ENCODE measurements at regions of chr4 and their contacts with region 1.

Region 1: DNA sequence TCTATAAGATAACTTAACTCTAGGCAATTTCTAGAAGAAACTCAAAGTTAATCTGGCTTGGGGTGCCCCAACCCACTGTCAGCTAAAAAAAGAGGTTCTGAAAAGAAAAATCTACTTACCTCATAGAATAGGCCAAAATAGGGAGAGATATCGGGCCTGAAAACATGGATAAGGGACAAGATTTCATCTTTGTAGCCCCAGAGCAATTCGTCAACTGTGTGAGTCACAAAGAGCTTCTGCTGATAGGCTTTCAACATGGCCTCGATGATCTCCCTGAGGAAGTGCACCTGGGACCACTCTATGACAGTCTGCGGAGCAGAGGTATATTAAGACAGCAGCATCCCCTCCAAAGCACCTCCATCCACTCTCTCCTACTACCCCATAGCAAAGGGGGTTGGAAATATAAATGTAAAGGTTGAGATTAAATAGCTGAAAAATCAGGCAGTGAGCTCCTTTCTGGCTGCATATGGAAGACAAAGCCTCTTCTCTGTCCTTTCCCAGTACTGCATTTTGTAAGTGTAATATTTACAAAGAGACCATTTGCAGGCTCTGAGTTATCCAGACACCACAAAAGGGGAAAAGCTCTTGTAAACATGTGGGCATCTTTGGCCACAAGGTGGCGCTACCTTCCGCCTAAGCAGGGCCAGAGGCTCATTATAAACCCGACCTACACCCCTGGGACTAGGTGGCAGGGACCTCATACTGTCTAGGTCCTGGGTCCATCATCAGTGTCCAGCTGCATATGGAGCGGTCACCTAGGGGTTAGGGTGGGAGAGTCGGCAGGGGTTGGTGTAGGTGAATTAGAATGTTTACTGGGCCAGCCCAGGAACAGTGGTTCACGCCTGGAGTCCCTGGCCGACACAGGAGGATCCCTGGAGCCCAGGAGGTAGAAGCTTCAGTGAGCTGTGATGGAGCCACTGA is 31.5 kb upstream of the NUP54 start:
- DNase-seq: peak; percentile 68 to 84
- ATAC-seq: peak; percentile 86 to 92
- H3K4me3 ChIP-seq: no peak overlapping the region
- H3K27ac ChIP-seq: peak overlapping the region; percentile 34 to 70 (median 56)
- H3K4me1 ChIP-seq: peaks cover 15 to 30% of the 10 kb centered on the region in 2 donors
- H3K27me3 ChIP-seq: no peaks in the 10 kb centered on the region
- CTCF ChIP-seq: peak; percentile 89 to 96 (median 93)
- POLR2A ChIP-seq: no peak

Region 2: DNA sequence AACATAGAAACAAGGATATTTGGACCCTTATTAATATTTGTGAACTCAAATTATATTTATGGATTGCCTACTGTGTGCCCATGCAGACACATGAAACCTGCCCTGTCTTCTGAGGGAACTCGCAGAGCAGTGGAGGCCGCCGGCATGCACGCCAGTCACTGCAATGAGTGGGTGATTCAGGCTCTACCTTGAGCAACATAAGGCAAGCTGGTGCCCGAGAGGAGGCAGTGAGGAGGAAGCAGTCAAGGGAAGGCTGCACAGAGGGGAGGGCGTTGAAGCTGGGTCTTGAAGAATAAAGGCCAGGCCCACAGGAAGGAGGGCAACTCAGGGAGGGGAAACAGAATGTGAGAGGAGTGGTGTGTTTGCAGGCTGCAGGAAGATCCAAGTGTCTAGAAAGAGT is 330.2 kb before region 1 on chr4:
- in situ Hi-C with region 1: no loop called
- intact Hi-C with region 1: no loop called
- DNase-seq: no peak
- ATAC-seq: no peak
- H3K4me3 ChIP-seq: no peak overlapping the region
- H3K27ac ChIP-seq: no peak overlapping the region
- H3K4me1 ChIP-seq: peaks cover 4 to 5% of the 10 kb centered on the region in 2 donors
- H3K27me3 ChIP-seq: no peaks in the 10 kb centered on the region
- CTCF ChIP-seq: no peak
- POLR2A ChIP-seq: no peak

Region 3: DNA sequence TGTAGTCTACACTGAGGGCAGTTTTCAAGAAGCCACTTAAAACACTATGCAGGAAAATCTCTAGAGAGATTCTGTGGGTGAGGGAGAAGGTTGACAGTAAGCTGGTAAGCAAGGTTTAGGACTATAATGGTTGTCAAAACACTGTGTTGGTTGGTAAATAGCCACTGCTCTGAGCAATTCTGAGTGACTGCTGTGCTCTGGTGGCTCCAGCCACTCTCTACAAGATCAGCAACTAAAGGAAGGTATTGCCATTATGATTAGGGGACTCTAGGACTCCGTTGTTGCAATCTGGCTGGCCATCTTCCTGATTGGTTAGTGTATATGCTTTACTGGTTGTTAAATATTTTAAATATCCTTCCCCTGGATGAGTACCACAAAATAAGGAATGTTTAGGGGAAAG is 66.4 kb after region 1 on chr4:
- in situ Hi-C with region 1: loop called in 2 of 4 experiments (anchors 10 kb)
- intact Hi-C with region 1: loop called (anchors 2 kb)
- DNase-seq: no peak
- ATAC-seq: peak; percentile 75 to 79
- H3K4me3 ChIP-seq: no peak overlapping the region
- H3K27ac ChIP-seq: no peak overlapping the region
- H3K4me1 ChIP-seq: peaks cover 8 to 15% of the 10 kb centered on the region in 2 donors
- H3K27me3 ChIP-seq: no peaks in the 10 kb centered on the region
- CTCF ChIP-seq: peak in 3 of 5 experiments; percentile 19 to 32 (median 27)
- POLR2A ChIP-seq: no peak

Region 4: DNA sequence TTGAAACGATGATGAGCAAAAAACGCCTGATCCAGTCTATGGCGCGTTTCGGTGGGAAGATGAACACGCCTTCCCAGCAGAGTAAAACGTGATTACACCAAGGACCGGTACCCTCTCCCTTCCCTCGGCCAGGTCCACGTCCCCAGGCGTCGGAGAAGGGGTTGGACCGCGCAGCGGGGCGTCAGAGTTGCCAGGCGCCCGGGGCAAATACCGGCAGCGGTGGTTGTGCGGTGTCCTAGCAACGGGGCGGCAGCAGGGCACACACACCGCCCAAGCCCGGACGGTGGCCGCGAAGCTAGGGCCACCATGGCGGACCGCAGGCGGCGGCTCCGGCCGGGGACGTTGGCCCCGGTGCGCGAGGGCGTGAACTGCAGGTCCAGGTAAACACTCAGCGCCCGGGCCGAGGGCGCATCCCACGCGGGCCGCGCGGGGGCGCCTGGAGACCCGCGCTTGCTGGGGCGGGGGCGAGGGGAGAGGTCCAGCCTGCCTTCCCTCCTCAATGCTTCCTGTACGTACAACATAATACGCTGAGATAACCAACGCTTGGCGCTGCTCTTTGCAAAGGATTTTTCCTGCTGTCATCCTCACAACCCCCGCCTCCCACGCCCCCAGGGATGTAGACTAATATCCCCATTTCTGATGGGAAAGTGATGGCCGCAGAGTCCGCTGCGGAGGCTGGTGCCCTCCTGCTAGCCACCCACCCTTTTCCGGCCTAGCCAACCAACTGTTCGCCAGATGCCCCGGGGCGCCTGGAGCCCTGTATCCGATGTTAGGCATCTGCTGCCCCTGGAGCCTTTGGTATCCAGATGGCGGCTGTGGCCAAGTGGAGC is 72.0 kb after region 1 on chr4 and contains the start of gene FAM47E:
- in situ Hi-C with region 1: loop called in 2 of 4 experiments (anchors 10 kb)
- intact Hi-C with region 1: loop called (anchors 2 kb)
- DNase-seq: peak; percentile 73 to 85
- ATAC-seq: peak; percentile 89 to 92
- H3K4me3 ChIP-seq: peak within 1 kb of the TSS; percentile 63 to 84 (median 65)
- H3K27ac ChIP-seq: peak within 1 kb of the TSS; percentile 73 to 90 (median 78)
- H3K4me1 ChIP-seq: peaks cover 3 to 8% of the 10 kb centered on the region in 2 donors
- H3K27me3 ChIP-seq: no peaks in the 10 kb centered on the region
- CTCF ChIP-seq: peak; percentile 38 to 63 (median 53)
- POLR2A ChIP-seq: peak; percentile 14 to 52
- total RNA-seq, gene FAM47E: 0.56 to 6.8 (median 3.8) TPM

Region 5: DNA sequence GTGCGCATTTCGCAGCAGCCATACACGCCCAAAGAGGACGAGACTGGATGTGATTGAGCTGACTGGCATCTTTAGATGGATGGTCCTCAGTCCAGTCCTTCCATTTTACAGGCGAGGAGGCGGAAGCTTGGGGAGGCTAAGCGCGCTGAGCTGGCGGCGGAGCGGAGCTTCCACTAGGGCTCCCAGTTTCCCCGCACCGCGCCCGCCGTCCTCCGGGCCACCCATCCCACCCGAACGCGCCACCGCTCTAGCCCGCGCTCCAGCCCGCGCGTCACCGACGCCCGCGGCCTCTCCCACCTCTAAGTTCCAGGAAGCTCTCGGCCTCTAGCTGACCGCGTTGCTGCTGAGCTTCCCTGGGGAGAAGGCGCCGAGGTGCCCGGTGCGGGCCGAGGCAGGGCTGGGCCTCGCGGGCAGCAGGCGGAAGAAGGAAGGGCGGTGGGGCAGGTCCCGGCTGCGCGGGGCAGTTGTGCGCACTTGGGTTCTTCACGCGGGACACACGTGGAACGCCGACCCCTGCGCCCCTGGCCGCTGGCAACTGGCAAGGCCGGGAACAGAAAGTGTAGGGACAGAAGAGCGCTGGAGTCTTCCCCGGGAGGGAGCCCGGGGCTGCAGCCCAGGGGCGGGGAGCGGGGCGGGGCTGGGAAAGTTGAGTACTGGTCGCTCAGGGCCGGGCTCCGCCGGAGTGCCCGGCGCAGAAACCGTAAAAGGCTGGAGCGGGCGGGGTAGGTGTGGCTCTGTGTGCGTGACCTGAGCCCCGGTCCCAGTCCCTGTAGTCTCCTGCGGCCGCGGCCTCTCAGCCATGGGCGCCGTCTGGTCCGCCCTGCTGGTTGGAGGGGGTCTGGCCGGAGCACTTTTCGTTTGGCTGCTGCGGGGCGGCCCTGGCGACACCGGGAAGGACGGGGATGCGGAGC is 126.6 kb after region 1 on chr4 and contains the start of gene STBD1:
- in situ Hi-C with region 1: loop called in 3 of 4 experiments (anchors 25 kb)
- intact Hi-C with region 1: loop called (anchors 2 kb)
- DNase-seq: peak; percentile 86 to 90
- ATAC-seq: peak; percentile 60 to 70
- H3K4me3 ChIP-seq: peak within 1 kb of the TSS; percentile 79 to 87 (median 86)
- H3K27ac ChIP-seq: peak within 1 kb of the TSS; percentile 93 to 98 (median 96)
- H3K4me1 ChIP-seq: peaks cover 68 to 69% of the 10 kb centered on the region in 2 donors
- H3K27me3 ChIP-seq: no peaks in the 10 kb centered on the region
- CTCF ChIP-seq: peak in 1 of 5 experiments; percentile 7
- POLR2A ChIP-seq: peak; percentile 81 to 88
- total RNA-seq, gene STBD1: 17.9 to 57.5 (median 41.5) TPM